MCF 10A (cell line): ENCODE measurements at regions of chr2 and their contacts with region 1.

Region 1: DNA sequence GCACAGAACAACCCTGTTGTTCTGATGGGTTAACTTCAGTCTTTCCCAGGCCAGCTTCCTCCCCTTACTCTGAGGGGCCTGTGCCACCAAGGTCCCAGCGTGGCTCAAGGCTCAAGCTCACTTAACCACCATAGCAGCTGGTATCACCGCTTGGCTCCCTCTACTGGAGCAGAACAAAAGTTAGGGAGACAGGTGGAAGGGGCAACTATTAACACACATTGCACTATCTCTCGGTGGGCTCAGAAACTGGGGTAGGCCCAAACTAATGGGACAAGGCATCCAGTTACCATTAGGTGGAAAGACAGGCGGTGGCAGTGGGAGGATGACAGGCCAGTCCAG is 88.7 kb upstream of the ATL2 start:
- DNase-seq: peak; percentile 64
- H3K4me3 Mint-ChIP-seq: no peak overlapping the region
- H3K27ac Mint-ChIP-seq: peak overlapping the region; percentile 70
- H3K4me1 Mint-ChIP-seq: peaks cover 24% of the 10 kb centered on the region
- H3K27me3 Mint-ChIP-seq: no peaks in the 10 kb centered on the region
- CTCF ChIP-seq: peak; percentile 31

Region 2: GRCh38 chr2:38352336-38352735 is 113.4 kb before region 1 on chr2:
- CTCF ChIA-PET with region 1: no interaction called
- POLR2A ChIA-PET with region 1: no interaction called
- intact Hi-C with region 1: no loop called
- DNase-seq: no peak
- H3K4me3 Mint-ChIP-seq: no peak overlapping the region
- H3K27ac Mint-ChIP-seq: no peak overlapping the region
- H3K4me1 Mint-ChIP-seq: peaks cover 5% of the 10 kb centered on the region
- H3K27me3 Mint-ChIP-seq: no peaks in the 10 kb centered on the region
- CTCF ChIP-seq: no peak

Region 3: GRCh38 chr2:38444247-38444646 is 21.5 kb before region 1 on chr2:
- CTCF ChIA-PET with region 1: interaction called, 16 read pairs
- POLR2A ChIA-PET with region 1: interaction called, 83 read pairs
- intact Hi-C with region 1: loop called (anchors 2 kb)
- DNase-seq: peak; percentile 60
- H3K4me3 Mint-ChIP-seq: no peak overlapping the region
- H3K27ac Mint-ChIP-seq: no peak overlapping the region
- H3K4me1 Mint-ChIP-seq: peaks cover 37% of the 10 kb centered on the region
- H3K27me3 Mint-ChIP-seq: no peaks in the 10 kb centered on the region
- CTCF ChIP-seq: no peak

Region 4: GRCh38 chr2:38515160-38516074 is 49.7 kb after region 1 on chr2:
- CTCF ChIA-PET with region 1: interaction called, 9 read pairs
- POLR2A ChIA-PET with region 1: interaction called, 12 read pairs
- intact Hi-C with region 1: no loop called
- DNase-seq: peak; percentile 89
- H3K4me3 Mint-ChIP-seq: peak overlapping the region; percentile 75
- H3K27ac Mint-ChIP-seq: peak overlapping the region; percentile 94
- H3K4me1 Mint-ChIP-seq: peaks cover 20% of the 10 kb centered on the region
- H3K27me3 Mint-ChIP-seq: no peaks in the 10 kb centered on the region
- CTCF ChIP-seq: no peak

Region 5: GRCh38 chr2:38528008-38528442 is 62.3 kb after region 1 on chr2:
- CTCF ChIA-PET with region 1: no interaction called
- POLR2A ChIA-PET with region 1: no interaction called
- intact Hi-C with region 1: loop called (anchors 2 kb)
- DNase-seq: peak; percentile 66
- H3K4me3 Mint-ChIP-seq: peak overlapping the region; percentile 69
- H3K27ac Mint-ChIP-seq: no peak overlapping the region
- H3K4me1 Mint-ChIP-seq: peaks cover 15% of the 10 kb centered on the region
- H3K27me3 Mint-ChIP-seq: no peaks in the 10 kb centered on the region
- CTCF ChIP-seq: no peak

Region 6: GRCh38 chr2:38643021-38643671 is 177.4 kb after region 1 on chr2:
- CTCF ChIA-PET with region 1: no interaction called
- POLR2A ChIA-PET with region 1: no interaction called
- intact Hi-C with region 1: no loop called
- DNase-seq: no peak
- H3K4me3 Mint-ChIP-seq: no peak overlapping the region
- H3K27ac Mint-ChIP-seq: no peak overlapping the region
- H3K4me1 Mint-ChIP-seq: peaks cover 5% of the 10 kb centered on the region
- H3K27me3 Mint-ChIP-seq: no peaks in the 10 kb centered on the region
- CTCF ChIP-seq: no peak